Thyroid gland (tissue), 4 donors: ENCODE measurements at regions of chr12 and their contacts with region 1.

Region 1: GRCh38 chr12:50839042-50839441 is 3.7 kb upstream of the TMPRSS12 start:
- DNase-seq: no peak
- H3K4me3 ChIP-seq: no peak overlapping the region
- H3K27ac ChIP-seq: no peak overlapping the region
- H3K4me1 ChIP-seq: no peaks in the 10 kb centered on the region
- H3K27me3 ChIP-seq: no peaks in the 10 kb centered on the region
- CTCF ChIP-seq: no peak
- POLR2A ChIP-seq: no peak

Region 2: DNA sequence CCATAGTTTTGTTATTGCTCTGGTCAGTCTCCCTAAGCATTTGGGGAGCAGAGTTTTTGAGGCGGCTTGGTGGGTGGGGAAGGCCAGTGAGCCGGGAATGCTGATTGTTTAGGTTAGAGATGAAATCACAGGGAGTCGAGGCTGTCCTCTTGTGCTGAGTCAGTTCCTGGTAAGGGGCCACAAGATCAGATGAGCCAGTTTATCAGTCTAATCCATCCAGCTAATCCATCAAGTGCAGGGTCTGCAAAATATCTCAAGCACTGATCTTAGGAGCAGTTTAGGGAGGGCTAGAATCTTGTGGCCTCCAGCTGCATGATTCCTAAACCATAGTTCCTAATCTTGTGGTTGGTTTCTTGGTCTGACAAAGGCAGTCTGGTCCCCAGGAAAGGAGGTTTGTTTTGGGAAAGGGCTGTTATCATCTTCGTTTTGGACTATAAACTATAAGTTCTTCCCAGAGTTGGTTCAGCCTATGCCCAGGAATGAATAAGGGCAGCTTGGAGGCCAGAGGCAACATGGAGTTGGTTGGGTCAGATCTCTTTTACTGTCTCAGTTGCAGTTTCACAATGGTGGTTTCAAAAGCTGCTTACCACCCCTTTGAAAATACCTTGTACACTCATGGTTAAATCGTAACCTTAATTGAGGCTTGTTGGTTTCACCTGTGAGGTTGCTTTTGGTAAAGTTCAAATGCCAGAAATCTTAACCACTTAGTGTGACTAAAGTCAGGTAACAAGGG is 79.7 kb after region 1 on chr12:
- intact Hi-C with region 1: loop called (anchors 10 kb)
- DNase-seq: no peak
- H3K4me3 ChIP-seq: no peak overlapping the region
- H3K27ac ChIP-seq: no peak overlapping the region
- H3K4me1 ChIP-seq: peaks cover 20 to 21% of the 10 kb centered on the region in 2 donors
- H3K27me3 ChIP-seq: no peaks in the 10 kb centered on the region
- CTCF ChIP-seq: no peak
- POLR2A ChIP-seq: no peak